ENCODE measurements at regions of chr11 and their contacts with region 1.

Region 1: DNA sequence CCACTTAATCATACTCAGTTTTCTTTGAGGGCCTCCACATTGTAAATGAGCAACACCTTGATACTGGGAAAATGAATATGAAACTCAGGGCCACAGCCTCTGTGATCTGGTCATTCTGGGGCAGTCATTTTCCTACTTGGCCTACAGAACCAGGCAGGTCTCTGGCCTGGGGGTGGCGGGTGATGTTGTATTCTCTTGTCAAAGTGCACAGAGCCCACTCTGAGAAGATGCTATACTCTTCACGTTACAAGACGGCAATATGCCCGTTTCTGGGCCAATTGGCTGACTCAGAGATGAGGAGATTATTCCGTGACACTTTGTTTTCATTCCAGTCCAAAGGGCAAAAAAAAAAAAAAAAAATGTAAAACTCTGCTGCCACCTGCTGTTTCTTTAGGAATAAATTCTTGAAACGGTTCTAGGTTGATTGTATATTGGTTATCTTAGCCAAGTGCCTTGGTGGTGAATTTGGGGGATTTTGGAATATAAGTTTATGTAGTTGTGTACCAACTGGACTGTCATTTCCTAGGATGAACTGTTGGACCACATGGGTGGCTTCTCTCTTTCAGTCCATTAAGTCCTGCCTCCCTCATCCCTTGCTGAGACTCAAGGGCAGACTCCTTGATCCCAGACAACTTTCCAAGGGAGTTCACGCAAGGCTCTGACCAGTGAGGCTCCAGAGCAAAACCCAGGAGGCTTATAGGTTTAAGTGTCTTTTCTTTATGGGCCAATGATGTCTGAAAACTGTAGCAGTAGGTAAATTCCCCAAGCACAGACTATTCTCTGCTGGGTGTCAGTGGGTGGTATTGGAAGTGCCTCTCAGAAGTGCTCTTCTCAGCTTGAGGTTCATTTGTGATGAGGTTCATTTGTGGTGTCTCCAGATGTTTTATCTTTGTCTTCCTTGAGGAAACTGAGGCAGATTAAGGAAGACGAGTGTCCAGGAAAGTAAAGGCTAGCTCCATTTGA is 18.2 kb downstream of the ADM start:
- H3K4me3 Mint-ChIP-seq: no peak overlapping the region
- H3K27ac Mint-ChIP-seq: no peak overlapping the region
- H3K4me1 Mint-ChIP-seq: peaks cover 25% of the 10 kb centered on the region
- H3K27me3 Mint-ChIP-seq: peaks cover 6% of the 10 kb centered on the region

Region 2: GRCh38 chr11:9757809-9758636 is 565.1 kb before region 1 on chr11:
- intact Hi-C with region 1: loop called (anchors 1 kb)
- H3K4me3 Mint-ChIP-seq: peak overlapping the region; percentile 75
- H3K27ac Mint-ChIP-seq: peak overlapping the region; percentile 62
- H3K4me1 Mint-ChIP-seq: peaks cover 40% of the 10 kb centered on the region
- H3K27me3 Mint-ChIP-seq: peaks cover 3% of the 10 kb centered on the region

Region 3: DNA sequence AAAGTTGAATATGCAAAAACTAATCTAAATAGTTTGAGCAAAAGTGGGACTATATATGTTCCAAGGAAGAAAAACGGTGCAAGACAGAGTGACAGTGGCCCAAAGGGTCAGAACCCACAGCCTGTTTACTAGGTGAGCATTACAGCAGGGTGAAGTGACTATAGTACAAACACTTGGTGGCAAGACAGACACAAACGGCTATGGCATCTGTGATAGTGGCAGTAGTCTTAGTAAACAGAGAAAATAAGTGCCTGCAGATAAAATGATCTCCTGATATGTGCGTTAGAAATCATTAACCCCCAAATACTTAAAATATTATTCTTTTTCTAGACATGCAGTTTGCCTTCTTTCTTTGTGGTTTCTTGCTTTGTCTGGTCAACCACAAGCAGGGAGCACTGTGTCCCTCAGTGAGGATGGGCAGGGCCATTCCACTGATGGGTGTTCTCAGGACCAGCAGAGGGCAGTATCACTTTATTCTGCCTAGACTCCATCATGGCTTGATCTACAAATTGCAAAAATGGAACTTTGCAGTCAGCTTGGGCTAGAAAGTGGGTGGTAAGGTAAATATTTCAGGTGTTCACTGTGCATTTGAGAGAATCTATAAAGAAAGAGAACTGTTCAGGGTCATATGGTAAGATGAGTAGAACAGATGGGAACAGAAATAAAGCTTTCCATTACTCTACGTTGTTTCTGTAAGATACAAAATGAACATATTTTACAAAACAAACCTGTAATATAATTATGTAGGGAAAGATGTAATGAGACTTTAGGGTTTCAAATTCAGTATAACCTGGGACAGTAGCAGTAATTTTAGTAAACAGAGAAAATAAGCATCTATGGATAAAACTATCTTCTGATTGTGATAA is 461.0 kb before region 1 on chr11:
- intact Hi-C with region 1: loop called (anchors 5 kb)
- H3K4me3 Mint-ChIP-seq: no peak overlapping the region
- H3K27ac Mint-ChIP-seq: no peak overlapping the region
- H3K4me1 Mint-ChIP-seq: no peaks in the 10 kb centered on the region
- H3K27me3 Mint-ChIP-seq: no peaks in the 10 kb centered on the region

Region 4: GRCh38 chr11:10526974-10527918 is 204.1 kb after region 1 on chr11:
- intact Hi-C with region 1: no loop called
- H3K4me3 Mint-ChIP-seq: no peak overlapping the region
- H3K27ac Mint-ChIP-seq: no peak overlapping the region
- H3K4me1 Mint-ChIP-seq: peaks cover 9% of the 10 kb centered on the region
- H3K27me3 Mint-ChIP-seq: no peaks in the 10 kb centered on the region